Adrenal gland (tissue), 19 donors: ENCODE measurements at regions of chr2 and their contacts with region 1.

Region 1: DNA sequence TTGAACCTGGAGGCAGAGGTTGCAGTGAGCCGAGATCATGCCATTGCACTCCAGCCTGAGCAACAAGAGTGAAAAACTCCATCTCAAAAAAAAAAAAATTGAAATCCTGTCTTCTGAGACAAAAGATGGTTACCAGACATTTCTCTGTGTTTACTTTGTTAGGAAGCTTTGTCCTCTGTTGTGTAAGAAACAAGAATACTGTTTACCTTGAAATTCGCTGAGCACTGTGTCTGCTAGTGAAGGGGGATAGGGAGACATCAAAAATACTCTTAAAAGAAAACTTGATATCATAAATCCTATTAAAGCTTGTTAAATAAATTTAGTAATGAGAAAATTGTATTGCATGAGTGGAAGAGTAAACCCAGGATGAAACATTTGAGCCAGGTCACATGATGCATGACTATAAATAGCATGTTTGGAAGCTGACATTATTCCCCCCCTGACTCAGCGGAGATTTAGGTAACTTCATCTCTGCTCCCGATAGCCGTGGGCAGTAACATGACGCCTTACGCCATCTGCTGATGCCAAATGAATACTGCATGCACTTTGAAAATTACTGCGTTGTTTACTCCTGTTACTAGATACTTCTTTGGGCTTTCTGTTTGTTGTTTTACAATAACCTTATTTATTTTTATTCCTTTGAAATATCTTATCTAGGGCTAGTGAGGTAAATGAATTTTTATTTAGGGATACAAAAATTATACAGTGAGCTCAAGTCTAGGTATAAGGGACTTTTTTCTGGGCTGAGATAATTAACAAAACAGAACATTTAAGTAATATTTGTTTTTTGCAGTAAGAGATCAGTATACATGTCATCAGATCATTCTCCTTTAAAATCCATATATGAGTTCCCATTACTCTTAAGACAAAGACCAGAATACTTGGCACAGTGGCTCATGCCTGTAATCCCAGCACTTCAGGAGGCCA is 134.9 kb downstream of the MAP3K20 start:
- DNase-seq: peak; percentile 77 to 92 (median 85)
- H3K4me3 ChIP-seq: peak overlapping the region in 1 of 4 donors; percentile 8
- H3K27ac ChIP-seq: peak overlapping the region in 2 of 5 donors; percentile 11 to 48
- H3K4me1 ChIP-seq: peaks cover 4 to 7% of the 10 kb centered on the region in 2 donors
- H3K27me3 ChIP-seq: no peaks in the 10 kb centered on the region
- CTCF ChIP-seq: peak; percentile 67 to 97 (median 95)
- POLR2A ChIP-seq: peak in 1 of 2 donors; percentile 6

Region 2: DNA sequence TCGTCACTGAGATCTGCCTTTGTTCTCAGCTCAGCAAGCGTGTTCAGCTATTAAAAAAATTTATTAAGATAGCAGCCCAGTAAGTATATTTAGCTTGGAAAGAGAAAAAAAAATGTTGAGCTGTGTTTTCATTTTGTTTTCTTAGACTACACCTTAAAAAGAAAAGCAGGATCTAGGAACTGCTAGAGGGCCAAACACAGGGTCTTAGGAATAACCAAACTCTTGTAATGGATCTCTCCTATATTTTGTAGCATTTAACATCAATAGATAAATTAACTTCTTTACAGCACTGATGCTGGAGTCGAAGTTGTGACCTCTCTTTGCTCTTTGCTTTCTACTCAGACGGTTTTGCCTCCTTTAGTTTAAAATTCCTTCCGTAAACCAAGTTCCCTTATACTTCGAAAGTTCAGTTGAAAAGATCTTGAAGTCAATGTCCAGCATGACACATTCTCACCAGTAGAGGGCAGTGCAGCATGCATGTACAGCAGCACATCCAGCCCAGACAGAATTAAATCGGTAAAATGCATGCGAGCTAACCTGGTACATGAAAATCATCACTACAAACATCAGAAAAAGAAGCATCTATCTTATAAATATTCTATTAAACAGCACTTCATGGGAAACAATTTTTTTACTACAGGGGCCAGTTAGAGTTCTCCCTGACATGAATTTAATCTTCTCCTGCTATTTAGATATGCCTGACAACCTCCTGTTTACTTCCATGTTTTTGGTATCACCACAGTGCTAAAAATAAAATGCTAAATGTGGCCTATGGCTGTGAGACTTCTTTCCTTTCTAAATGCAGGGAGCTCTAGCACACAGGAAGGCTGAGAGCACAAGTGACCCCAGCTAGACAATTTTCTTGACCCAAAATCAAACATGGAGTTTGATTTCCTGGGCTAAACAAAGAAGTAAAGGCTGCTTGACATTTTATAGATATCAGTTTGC is 183.1 kb before region 1 on chr2:
- intact Hi-C with region 1: loop called (anchors 2 to 5 kb)
- DNase-seq: peak; percentile 80 to 97 (median 91)
- H3K4me3 ChIP-seq: no peak overlapping the region
- H3K27ac ChIP-seq: peak overlapping the region in 2 of 5 donors; percentile 22 to 42
- H3K4me1 ChIP-seq: peaks cover 0 to 5% of the 10 kb centered on the region in 2 donors
- H3K27me3 ChIP-seq: no peaks in the 10 kb centered on the region
- CTCF ChIP-seq: peak; percentile 95 to 97 (median 95)
- POLR2A ChIP-seq: no peak